Stomach (tissue), 19 donors: ENCODE measurements at regions of chr3 and their contacts with region 1.

Region 1: DNA sequence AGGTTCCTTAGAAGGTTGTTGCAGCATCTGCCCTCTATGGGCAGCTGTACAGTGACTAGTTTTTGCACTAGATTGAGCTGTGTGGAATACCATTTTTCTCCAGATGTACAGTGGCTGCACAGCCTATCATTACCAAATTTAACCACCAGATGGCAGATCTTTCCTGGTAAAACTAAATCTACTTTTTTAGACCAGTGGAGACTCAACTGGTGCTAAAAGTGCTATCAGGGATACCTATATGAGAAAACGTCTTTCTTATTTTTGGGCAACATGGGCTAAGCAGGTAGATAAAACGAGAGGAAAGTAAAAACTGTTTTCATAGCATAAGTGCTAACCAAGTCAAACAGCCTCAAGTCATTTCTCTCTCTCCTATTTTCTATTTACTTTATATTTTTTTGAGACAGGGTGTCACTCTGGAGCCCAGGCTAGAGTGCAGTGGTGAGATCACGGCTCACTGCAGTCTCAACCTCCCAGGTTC is 21.2 kb downstream of the IGSF10 start:
- DNase-seq: peak in 1 of 2 donors; percentile 86
- H3K4me3 ChIP-seq: no peak overlapping the region
- H3K27ac ChIP-seq: no peak overlapping the region
- H3K4me1 ChIP-seq: peaks cover 0 to 5% (median 0%) of the 10 kb centered on the region in 4 donors
- H3K27me3 ChIP-seq: no peaks in the 10 kb centered on the region
- CTCF ChIP-seq: peak in 5 of 7 experiments; percentile 83 to 91 (median 86)
- EP300 ChIP-seq: no peak
- POLR2A ChIP-seq: no peak

Region 2: DNA sequence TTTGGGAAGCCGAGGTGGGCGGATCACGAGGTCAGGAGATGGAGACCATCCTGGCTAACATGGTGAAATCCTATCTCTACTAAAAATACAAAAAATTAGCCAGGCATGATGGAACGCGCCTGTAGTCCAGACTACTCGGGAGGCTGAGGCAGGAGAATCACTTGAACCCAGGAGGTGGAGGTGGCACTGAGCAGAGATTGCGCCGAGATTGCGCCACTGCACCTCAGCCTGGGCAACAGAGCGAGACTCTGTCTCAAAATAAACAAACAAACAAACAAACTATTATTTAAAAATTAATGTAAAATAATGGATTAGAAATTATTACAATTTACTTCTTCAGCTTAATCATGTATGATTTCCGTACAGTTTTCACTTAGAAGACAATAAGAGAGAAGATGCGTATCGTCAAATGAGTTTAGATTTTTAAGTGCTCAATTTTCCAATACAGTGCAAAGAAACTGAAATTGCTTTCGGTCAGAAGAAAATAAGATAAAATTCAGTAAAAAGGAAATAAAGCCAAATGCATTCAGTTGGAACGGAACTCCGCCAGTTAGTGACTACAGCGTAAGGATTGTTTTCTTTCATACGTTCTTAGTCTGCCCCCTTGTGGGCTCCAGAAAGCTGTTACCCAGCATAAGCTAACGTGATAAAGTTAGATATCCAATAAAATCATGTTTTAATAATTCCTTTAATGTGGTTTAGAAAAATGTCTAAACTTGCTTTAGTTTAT is 399.1 kb after region 1 on chr3:
- intact Hi-C with region 1: loop called (anchors 10 kb)
- DNase-seq: peak; percentile 61 to 93
- H3K4me3 ChIP-seq: peak overlapping the region in 3 of 4 donors; percentile 12 to 23 (median 22)
- H3K27ac ChIP-seq: no peak overlapping the region
- H3K4me1 ChIP-seq: peaks cover 4 to 32% (median 17%) of the 10 kb centered on the region in 4 donors
- H3K27me3 ChIP-seq: no peaks in the 10 kb centered on the region
- CTCF ChIP-seq: peak in 5 of 7 experiments; percentile 63 to 75 (median 70)
- EP300 ChIP-seq: no peak
- POLR2A ChIP-seq: no peak

Region 3: GRCh38 chr3:151918253-151919029 is 478.8 kb after region 1 on chr3:
- intact Hi-C with region 1: loop called (anchors 10 kb)
- DNase-seq: peak in 1 of 2 donors; percentile 73
- H3K4me3 ChIP-seq: no peak overlapping the region
- H3K27ac ChIP-seq: no peak overlapping the region
- H3K4me1 ChIP-seq: peaks cover 0 to 8% (median 0%) of the 10 kb centered on the region in 4 donors
- H3K27me3 ChIP-seq: no peaks in the 10 kb centered on the region
- CTCF ChIP-seq: peak in 5 of 7 experiments; percentile 32 to 59 (median 52)
- EP300 ChIP-seq: no peak
- POLR2A ChIP-seq: no peak